PC-3 (cell line): ENCODE measurements at regions of chr7 and their contacts with region 1.

Region 1: GRCh38 chr7:51067757-51068156 is 248.9 kb downstream of the COBL start:
- DNase-seq: peak; percentile 85
- ATAC-seq: peak; percentile 65
- H3K4me3 ChIP-seq: no peak overlapping the region
- H3K27ac ChIP-seq: no peak overlapping the region
- H3K4me1 ChIP-seq: peaks cover 28% of the 10 kb centered on the region
- H3K27me3 ChIP-seq: no peaks in the 10 kb centered on the region
- CTCF ChIP-seq: peak; percentile 90

Region 2: DNA sequence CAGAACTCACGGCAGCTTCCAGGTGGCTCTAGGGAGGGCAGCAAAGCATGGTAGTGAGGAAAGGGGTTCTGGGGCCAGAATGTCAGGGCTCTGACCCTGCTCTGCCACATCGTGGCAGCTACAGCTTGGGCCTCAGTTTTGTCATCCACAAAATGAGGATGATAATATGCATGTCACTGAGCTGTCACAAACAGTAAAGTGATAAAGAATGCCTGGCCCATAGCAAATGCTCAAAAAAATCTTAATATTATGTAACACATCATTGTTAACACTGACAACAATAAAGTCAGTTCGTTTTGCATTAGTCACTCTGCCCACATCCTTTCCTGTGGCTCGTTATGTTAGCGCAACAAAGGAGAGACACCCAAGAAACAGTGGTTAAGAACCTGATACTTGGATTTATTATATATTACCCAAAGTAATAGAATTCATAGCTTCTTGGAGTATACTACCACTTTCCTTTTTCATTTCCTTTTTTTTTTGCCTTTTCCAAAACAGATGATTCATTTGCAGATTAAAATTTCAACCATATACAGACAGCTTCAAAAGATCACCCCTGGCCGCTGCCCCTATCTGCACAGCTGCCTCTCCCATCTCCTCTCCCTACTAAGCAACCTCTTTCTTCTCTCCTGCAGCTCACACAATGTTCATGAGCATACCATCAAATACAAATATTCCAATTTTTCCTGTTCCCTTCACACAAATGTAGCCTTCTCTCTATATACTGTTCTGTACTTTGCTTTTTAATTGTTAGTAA is 457.1 kb before region 1 on chr7:
- CTCF ChIA-PET with region 1: interaction called, 6 read pairs
- POLR2A ChIA-PET with region 1: no interaction called
- intact Hi-C with region 1: loop called (anchors 10 kb)
- DNase-seq: peak; percentile 88
- ATAC-seq: peak; percentile 97
- H3K4me3 ChIP-seq: no peak overlapping the region
- H3K27ac ChIP-seq: no peak overlapping the region
- H3K4me1 ChIP-seq: peaks cover 15% of the 10 kb centered on the region
- H3K27me3 ChIP-seq: no peaks in the 10 kb centered on the region
- CTCF ChIP-seq: no peak

Region 3: DNA sequence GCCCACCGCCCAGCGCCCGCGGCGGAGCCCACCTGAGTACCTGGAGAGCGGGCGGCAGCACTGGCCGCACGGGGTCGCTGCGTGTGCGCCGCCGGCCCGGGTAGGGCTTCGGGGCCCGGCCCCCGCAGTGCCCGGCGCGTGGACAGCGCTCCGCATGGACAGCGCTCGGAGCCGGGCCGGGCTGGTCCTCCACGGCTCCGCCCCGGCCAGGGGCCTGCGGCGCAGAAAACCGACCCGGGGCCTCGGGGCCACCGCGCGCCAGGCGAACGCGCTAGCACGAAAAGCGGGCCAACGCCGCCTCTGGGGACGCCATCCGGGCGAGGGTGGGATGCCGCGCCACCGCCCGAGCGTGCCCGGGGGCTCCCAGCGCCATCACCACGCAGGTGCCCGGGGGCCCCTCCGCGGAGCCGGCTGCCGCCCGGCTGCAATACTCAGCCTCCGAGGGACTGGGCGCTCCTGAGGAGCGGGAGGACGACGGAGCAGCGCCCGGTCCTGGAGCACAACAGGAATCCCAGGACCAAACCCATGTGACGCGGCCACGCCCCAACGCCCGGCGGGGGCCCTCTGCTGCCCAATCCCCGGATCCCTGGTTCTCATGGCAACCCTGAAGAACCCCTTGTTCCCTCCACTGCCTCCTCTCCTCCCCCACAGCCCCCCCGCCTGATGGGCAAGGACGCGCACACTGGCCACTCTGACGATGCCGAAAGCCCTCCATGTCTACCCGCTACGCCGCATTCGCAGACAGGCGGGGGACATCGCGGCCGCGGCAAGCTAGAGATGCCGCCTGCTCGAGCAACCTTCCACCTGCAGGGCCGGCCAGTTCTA is 285.2 kb before region 1 on chr7 and contains the start of gene GRB10:
- CTCF ChIA-PET with region 1: no interaction called
- POLR2A ChIA-PET with region 1: no interaction called
- intact Hi-C with region 1: loop called (anchors 1 kb)
- DNase-seq: peak; percentile 56
- ATAC-seq: peak; percentile 84
- H3K4me3 ChIP-seq: peak within 1 kb of the TSS; percentile 80
- H3K27ac ChIP-seq: peak within 1 kb of the TSS; percentile 57
- H3K4me1 ChIP-seq: peaks cover 7% of the 10 kb centered on the region; the same call in 1 of the 2 replicates
- H3K27me3 ChIP-seq: no peaks in the 10 kb centered on the region
- CTCF ChIP-seq: 0 out of 2 replicates have a peak, but pooled peaks have one; percentile 26
- total RNA-seq, gene GRB10: 61.3 and 89.8 TPM in 2 replicates

Region 4: GRCh38 chr7:50826371-50827172 is 241.2 kb before region 1 on chr7:
- CTCF ChIA-PET with region 1: no interaction called
- POLR2A ChIA-PET with region 1: no interaction called
- intact Hi-C with region 1: loop called (anchors 2 kb)
- DNase-seq: peak; percentile 96
- ATAC-seq: peak; percentile 93
- H3K4me3 ChIP-seq: no peak overlapping the region
- H3K27ac ChIP-seq: peak overlapping the region; percentile 98
- H3K4me1 ChIP-seq: peaks cover 58% of the 10 kb centered on the region
- H3K27me3 ChIP-seq: no peaks in the 10 kb centered on the region
- CTCF ChIP-seq: no peak

Region 5: GRCh38 chr7:51034521-51035264 is 33.1 kb before region 1 on chr7:
- CTCF ChIA-PET with region 1: no interaction called
- POLR2A ChIA-PET with region 1: no interaction called
- intact Hi-C with region 1: loop called (anchors 1 kb)
- DNase-seq: peak; percentile 71
- ATAC-seq: peak; percentile 77
- H3K4me3 ChIP-seq: no peak overlapping the region
- H3K27ac ChIP-seq: peak overlapping the region; percentile 21; the same call in 1 of the 2 replicates
- H3K4me1 ChIP-seq: peaks cover 32% of the 10 kb centered on the region
- H3K27me3 ChIP-seq: no peaks in the 10 kb centered on the region
- CTCF ChIP-seq: no peak

Region 6: DNA sequence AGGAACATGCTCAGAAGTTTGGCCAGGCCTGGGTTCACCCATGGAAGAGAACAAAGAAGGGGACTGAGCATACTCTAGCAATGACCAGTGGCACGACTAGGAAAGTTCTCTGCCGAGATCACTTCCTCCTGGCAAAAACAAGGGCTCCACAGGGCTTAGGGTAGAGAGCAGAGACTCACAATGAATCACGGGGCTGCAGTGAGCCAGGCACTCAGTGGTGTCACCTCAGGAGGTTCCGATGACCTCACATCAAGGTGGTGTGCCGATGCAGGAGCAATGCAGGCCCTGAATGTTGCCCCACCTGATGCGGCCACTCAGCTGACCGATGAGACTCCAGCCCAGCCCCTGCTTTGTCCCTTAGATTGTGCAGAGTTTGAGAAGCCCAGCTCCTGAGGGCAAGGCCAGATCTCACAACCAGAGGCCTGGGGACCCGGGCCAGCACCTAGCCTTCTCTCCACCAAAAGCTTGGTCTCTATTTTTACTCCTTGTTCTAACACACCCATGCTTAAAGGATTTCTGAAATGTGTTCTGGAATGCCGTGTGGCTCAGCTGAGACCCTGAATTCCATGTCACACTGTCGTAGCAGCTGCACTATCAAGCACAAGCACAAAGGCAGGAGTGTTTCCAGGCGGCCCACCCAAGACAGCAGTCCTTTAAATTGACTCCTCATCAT is 187.9 kb after region 1 on chr7:
- CTCF ChIA-PET with region 1: no interaction called
- POLR2A ChIA-PET with region 1: no interaction called
- intact Hi-C with region 1: no loop called
- DNase-seq: peak; percentile 65
- ATAC-seq: peak; percentile 82
- H3K4me3 ChIP-seq: no peak overlapping the region
- H3K27ac ChIP-seq: 0 out of 2 replicates have a peak overlapping the region, but pooled peaks have one; percentile 12
- H3K4me1 ChIP-seq: peaks cover 18% of the 10 kb centered on the region
- H3K27me3 ChIP-seq: no peaks in the 10 kb centered on the region
- CTCF ChIP-seq: no peak